Activated CD4-positive, alpha-beta T cell treated with anti-CD3 and anti-CD28 coated beads, Interleukin-2, amount 10 ng/mL, durations not matched to agents 24 days and 14 days (primary cell): ENCODE measurements at regions of chr14 and their contacts with region 1.

Region 1: GRCh38 chr14:71320107-71320733 is 413.0 kb downstream of the PCNX1 start:
- DNase-seq: peak; percentile 100
- H3K4me3 Mint-ChIP-seq: peak within 1 kb of the TSS; percentile 96
- H3K27ac Mint-ChIP-seq: peak within 1 kb of the TSS; percentile 99
- H3K4me1 Mint-ChIP-seq: peaks cover 40% of the 10 kb centered on the region
- H3K27me3 Mint-ChIP-seq: no peaks in the 10 kb centered on the region

Region 2: DNA sequence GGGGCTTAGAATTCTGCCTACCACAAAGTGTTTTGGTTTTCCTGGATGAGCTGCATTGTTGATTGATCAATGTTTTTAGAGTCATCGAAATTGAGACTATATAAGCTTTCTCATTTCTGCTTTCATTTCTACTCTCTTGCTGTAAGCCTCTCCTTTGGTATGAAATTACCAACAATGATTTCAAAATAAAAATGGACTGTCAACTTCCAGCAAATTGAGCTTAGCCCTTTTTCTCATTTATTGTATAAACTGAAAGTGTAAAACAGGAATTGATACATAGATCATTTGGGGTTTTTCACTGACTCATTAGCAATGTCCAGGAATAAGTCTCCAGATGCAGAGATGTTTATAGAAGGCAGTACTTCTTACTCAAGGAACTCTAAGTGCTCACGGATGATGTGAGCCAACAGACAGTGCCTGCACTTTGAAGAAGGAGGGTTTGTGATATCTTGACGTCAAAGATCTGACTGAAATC is 433.0 kb before region 1 on chr14:
- intact Hi-C with region 1: loop called (anchors 10 kb)
- DNase-seq: no peak
- H3K4me3 Mint-ChIP-seq: peak overlapping the region; percentile 76
- H3K27ac Mint-ChIP-seq: peak overlapping the region; percentile 93
- H3K4me1 Mint-ChIP-seq: peaks cover 80% of the 10 kb centered on the region
- H3K27me3 Mint-ChIP-seq: no peaks in the 10 kb centered on the region

Region 3: GRCh38 chr14:71221119-71221518 is 99.1 kb before region 1 on chr14:
- intact Hi-C with region 1: loop called (anchors 2 kb)
- DNase-seq: no peak
- H3K4me3 Mint-ChIP-seq: no peak overlapping the region
- H3K27ac Mint-ChIP-seq: no peak overlapping the region
- H3K4me1 Mint-ChIP-seq: peaks cover 15% of the 10 kb centered on the region
- H3K27me3 Mint-ChIP-seq: no peaks in the 10 kb centered on the region

Region 4: DNA sequence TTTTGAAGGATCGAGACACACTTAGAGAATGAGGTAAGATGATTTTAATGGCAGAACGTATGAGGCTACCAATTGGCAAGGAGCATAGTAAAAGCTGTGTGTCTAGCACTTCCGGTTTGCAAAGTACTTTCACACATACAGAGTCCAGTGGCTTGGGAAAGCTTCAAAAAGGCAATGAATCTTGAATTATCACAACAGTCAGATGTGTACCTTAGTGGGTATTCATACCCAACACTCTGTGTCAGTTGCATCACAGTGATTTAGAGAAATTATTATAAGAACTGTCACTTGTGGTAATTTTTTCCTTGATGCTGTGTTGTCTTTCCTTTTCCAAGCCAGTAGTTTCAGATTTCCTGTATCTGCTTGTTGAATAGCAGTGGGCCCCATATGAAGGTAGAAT is 11.2 kb after region 1 on chr14:
- intact Hi-C with region 1: loop called (anchors 1 kb)
- DNase-seq: no peak
- H3K4me3 Mint-ChIP-seq: peak overlapping the region; percentile 23
- H3K27ac Mint-ChIP-seq: peak overlapping the region; percentile 92
- H3K4me1 Mint-ChIP-seq: peaks cover 55% of the 10 kb centered on the region
- H3K27me3 Mint-ChIP-seq: no peaks in the 10 kb centered on the region

Region 5: GRCh38 chr14:71478542-71478941 is 158.3 kb after region 1 on chr14:
- intact Hi-C with region 1: loop called (anchors 5 kb)
- DNase-seq: peak; percentile 77
- H3K4me3 Mint-ChIP-seq: peak overlapping the region; percentile 15
- H3K27ac Mint-ChIP-seq: peak overlapping the region; percentile 68
- H3K4me1 Mint-ChIP-seq: peaks cover 45% of the 10 kb centered on the region
- H3K27me3 Mint-ChIP-seq: no peaks in the 10 kb centered on the region

Region 6: DNA sequence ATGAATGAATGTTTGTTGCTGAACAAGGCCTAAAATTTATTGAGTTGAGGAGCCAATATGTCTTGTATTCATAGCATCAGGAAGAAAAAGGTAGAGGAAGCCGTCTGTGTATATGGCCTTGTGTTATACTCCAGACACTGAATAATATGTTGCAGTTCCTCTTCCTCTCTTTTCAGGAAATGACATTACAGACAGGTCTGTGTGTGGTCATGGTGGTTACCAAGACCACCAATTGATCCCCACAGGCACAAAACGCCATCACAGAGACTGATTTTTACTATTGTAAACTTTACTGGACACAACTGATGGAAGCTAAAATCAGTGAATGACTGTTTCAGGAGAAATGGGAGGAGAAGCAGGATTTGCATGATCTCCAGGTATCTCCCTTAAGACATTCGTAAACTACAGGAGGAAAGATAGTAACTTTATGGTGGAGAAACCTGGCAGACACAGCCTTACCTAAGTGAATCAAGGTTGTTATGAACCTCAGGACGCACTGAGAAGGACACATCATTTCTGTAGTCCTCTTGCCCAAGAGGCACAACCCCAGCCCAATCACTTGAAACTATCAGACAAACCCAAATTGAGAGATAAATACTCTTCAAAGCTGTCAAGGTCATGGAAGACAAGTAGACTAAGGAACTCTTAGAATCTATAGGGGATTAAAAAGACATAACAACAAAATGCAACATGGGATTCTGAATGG is 277.9 kb after region 1 on chr14:
- intact Hi-C with region 1: loop called (anchors 5 kb)
- DNase-seq: no peak
- H3K4me3 Mint-ChIP-seq: peak overlapping the region; percentile 15
- H3K27ac Mint-ChIP-seq: peak overlapping the region; percentile 25
- H3K4me1 Mint-ChIP-seq: peaks cover 47% of the 10 kb centered on the region
- H3K27me3 Mint-ChIP-seq: no peaks in the 10 kb centered on the region

Region 7: DNA sequence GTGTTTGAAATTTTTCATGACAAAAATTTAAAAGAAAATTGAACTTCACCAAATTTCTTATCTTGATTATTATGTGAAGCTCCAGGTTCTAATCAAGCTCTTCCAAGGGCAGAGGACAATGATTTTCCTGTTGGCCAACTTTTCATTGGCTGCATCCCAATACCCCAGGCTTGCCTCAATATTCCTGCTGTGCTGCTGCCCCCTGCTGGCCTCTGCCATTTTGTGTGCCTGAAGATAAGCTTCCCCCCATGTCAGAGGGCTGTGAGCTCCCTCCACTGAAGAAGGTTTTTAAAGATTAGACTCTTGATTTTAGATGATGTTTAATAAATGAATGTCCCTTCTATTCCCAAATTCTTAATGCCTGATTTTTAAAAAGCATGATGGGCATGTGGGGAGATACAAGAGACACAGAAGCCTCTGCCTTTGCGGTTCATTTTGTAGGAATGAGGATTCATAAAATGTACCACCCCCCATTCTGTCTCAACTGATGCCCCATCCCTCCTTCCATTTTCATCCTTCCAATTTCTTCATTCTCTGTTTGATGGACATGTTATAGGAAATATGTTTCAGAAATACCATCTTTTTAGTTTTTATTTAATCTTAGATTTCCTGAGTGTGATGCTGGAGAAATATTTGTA is 535.3 kb after region 1 on chr14:
- intact Hi-C with region 1: loop called (anchors 10 kb)
- DNase-seq: peak; percentile 86
- H3K4me3 Mint-ChIP-seq: no peak overlapping the region
- H3K27ac Mint-ChIP-seq: no peak overlapping the region
- H3K4me1 Mint-ChIP-seq: peaks cover 17% of the 10 kb centered on the region
- H3K27me3 Mint-ChIP-seq: peaks cover 28% of the 10 kb centered on the region